ENCODE measurements at regions of chr19 and their contacts with region 1.

Region 1: DNA sequence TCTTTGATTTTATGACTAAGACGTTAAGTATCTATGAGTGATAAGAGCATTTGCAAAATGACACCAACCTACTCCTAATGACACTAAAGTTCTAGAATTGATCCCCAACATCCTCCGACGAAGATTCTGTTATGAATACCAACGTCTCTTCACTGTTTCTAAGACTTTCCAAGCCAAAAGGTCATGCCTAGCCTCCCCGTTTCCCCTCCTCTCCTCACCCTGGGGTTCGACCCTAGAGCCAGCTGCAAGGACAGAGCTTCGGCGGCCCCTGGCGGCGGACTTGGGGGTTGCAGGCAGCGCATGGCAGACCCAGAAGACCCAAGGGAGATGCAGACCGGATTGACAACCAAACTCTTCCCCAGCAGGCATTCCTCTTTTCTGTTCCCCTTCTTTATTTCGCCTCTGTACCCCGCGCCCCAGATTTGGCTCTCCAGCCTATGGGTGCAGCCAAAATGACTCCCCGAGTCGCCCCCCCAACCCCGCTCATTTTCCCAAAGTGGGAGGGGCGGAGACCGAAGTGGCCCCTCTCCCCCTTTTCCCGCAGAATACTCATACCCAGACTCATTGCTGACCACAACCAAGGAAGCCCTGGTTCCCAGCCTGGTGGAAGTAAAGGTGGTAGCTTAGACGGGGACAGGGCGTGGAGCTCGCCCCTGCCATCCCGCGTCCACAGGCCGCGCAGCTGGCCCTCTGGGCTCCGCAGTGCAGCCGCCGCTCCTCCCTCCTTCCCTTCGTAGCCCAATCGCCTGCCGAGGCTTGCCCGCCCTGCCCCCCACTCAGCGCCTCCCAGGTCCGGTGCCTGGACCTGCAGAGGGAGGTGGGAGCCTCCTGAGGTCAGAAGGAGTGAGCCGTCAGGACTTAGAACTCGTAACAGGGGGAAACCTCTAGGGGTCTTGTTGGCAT is 4.1 kb upstream of the EML2 start:
- DNase-seq: peak; percentile 91 to 95
- H3K4me3 ChIP-seq: peak overlapping the region; percentile 41
- H3K4me3 Mint-ChIP-seq: peak overlapping the region; percentile 70
- H3K27ac Mint-ChIP-seq: no peak overlapping the region
- H3K4me1 ChIP-seq: peaks cover 20% of the 10 kb centered on the region
- H3K4me1 Mint-ChIP-seq: peaks cover 25% of the 10 kb centered on the region
- H3K27me3 ChIP-seq: no peaks in the 10 kb centered on the region
- H3K27me3 Mint-ChIP-seq: no peaks in the 10 kb centered on the region
- CTCF ChIP-seq: peak; percentile 99

Region 2: GRCh38 chr19:45485305-45486077 is 157.8 kb before region 1 on chr19:
- CTCF ChIA-PET with region 1: interaction called, 17 read pairs
- POLR2A ChIA-PET with region 1: interaction called, 3 read pairs
- intact Hi-C with region 1: loop called (anchors 10 kb)
- DNase-seq: peak; percentile 98
- H3K4me3 ChIP-seq: peak overlapping the region; percentile 66
- H3K4me3 Mint-ChIP-seq: peak overlapping the region; percentile 88
- H3K27ac Mint-ChIP-seq: peak overlapping the region; percentile 74
- H3K4me1 ChIP-seq: no peaks in the 10 kb centered on the region
- H3K4me1 Mint-ChIP-seq: peaks cover 6% of the 10 kb centered on the region
- H3K27me3 ChIP-seq: no peaks in the 10 kb centered on the region
- H3K27me3 Mint-ChIP-seq: no peaks in the 10 kb centered on the region
- CTCF ChIP-seq: peak; percentile 91 to 92

Region 3: GRCh38 chr19:45528651-45529419 is 114.4 kb before region 1 on chr19:
- CTCF ChIA-PET with region 1: interaction called, 27 read pairs
- POLR2A ChIA-PET with region 1: no interaction called
- intact Hi-C with region 1: no loop called
- DNase-seq: peak; percentile 88 to 92
- H3K4me3 ChIP-seq: peak overlapping the region; percentile 63
- H3K4me3 Mint-ChIP-seq: peak overlapping the region; percentile 85
- H3K27ac Mint-ChIP-seq: peak overlapping the region; percentile 55
- H3K4me1 ChIP-seq: 0 out of 2 replicates have a peak, but pooled peaks cover 8% of the 10 kb centered on the region
- H3K4me1 Mint-ChIP-seq: peaks cover 10% of the 10 kb centered on the region
- H3K27me3 ChIP-seq: no peaks in the 10 kb centered on the region
- H3K27me3 Mint-ChIP-seq: no peaks in the 10 kb centered on the region
- CTCF ChIP-seq: peak in 1 of 2 experiments; percentile 24

Region 4: DNA sequence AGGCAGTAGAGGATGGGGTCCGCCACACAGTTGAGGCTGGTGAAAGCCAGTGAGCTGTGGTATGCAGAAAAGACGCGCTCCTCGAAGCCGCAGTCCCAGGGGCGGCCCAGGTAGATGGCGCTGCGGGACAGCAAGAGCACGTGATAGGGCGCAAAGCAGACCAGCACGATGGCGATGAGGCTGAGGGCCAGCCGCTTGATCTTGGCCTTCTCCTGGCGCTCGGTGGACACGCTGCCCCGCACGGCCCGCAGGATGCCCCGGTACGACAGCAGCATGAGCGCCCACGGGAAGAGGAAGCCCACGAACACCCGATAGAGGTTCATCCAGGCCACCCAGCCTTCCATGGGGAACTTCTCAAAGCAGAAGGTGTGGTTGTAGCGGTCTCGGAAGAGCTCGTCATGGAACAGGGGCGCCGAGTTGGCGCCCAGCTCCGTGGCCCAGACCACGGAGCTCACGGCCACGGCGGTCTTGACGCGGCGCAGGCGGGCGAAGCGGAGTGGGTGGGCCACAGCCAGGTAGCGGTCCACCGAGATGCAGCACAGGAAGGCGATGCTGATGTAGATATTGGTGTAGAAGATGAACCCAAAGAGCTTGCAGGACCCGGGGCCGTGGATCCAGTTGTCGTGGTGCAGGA is 52.2 kb before region 1 on chr19:
- CTCF ChIA-PET with region 1: interaction called, 77 read pairs
- POLR2A ChIA-PET with region 1: no interaction called
- intact Hi-C with region 1: loop called (anchors 1 kb)
- DNase-seq: peak; percentile 83 to 85
- H3K4me3 ChIP-seq: peak overlapping the region; percentile 13; the same call in 1 of the 2 replicates
- H3K4me3 Mint-ChIP-seq: peak overlapping the region; percentile 43
- H3K27ac Mint-ChIP-seq: no peak overlapping the region
- H3K4me1 ChIP-seq: peaks cover 4% of the 10 kb centered on the region
- H3K4me1 Mint-ChIP-seq: peaks cover 7% of the 10 kb centered on the region
- H3K27me3 ChIP-seq: no peaks in the 10 kb centered on the region
- H3K27me3 Mint-ChIP-seq: peaks cover 18% of the 10 kb centered on the region
- CTCF ChIP-seq: peak; percentile 75 to 88

Region 5: GRCh38 chr19:45630493-45630919 is 12.8 kb before region 1 on chr19:
- CTCF ChIA-PET with region 1: interaction called, 14 read pairs
- POLR2A ChIA-PET with region 1: interaction called, 8 read pairs
- intact Hi-C with region 1: no loop called
- DNase-seq: no peak
- H3K4me3 ChIP-seq: no peak overlapping the region
- H3K4me3 Mint-ChIP-seq: no peak overlapping the region
- H3K27ac Mint-ChIP-seq: no peak overlapping the region
- H3K4me1 ChIP-seq: no peaks in the 10 kb centered on the region
- H3K4me1 Mint-ChIP-seq: no peaks in the 10 kb centered on the region
- H3K27me3 ChIP-seq: no peaks in the 10 kb centered on the region
- H3K27me3 Mint-ChIP-seq: no peaks in the 10 kb centered on the region
- CTCF ChIP-seq: no peak

Region 6: DNA sequence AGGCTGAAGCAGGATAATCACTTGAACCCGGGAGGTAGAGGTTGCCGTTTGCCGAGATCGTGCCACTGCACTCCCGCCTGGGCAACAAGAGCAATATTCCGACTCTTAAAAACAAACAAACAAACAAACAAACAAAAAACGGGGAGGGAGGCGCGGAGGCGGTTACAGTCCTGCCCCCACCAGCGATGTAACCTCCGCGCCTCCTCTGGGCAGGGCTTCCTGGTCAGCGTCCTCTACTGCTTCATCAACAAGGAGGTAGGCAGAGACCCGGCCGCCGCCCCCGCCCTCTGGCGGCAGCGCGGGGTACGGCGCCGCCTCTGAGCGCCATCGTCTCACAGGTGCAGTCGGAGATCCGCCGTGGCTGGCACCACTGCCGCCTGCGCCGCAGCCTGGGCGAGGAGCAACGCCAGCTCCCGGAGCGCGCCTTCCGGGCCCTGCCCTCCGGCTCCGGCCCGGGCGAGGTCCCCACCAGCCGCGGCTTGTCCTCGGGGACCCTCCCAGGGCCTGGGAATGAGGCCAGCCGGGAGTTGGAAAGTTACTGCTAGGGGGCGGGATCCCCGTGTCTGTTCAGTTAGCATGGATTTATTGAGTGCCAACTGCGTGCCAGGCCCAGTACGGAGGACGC is 38.2 kb after region 1 on chr19:
- CTCF ChIA-PET with region 1: interaction called, 50 read pairs
- POLR2A ChIA-PET with region 1: interaction called, 6 read pairs
- intact Hi-C with region 1: no loop called
- DNase-seq: peak; percentile 88 to 93
- H3K4me3 ChIP-seq: peak overlapping the region; percentile 40
- H3K4me3 Mint-ChIP-seq: peak overlapping the region; percentile 76
- H3K27ac Mint-ChIP-seq: peak overlapping the region; percentile 81
- H3K4me1 ChIP-seq: peaks cover 15% of the 10 kb centered on the region
- H3K4me1 Mint-ChIP-seq: peaks cover 12% of the 10 kb centered on the region
- H3K27me3 ChIP-seq: no peaks in the 10 kb centered on the region
- H3K27me3 Mint-ChIP-seq: no peaks in the 10 kb centered on the region
- CTCF ChIP-seq: peak; percentile 96 to 97

Region 7: DNA sequence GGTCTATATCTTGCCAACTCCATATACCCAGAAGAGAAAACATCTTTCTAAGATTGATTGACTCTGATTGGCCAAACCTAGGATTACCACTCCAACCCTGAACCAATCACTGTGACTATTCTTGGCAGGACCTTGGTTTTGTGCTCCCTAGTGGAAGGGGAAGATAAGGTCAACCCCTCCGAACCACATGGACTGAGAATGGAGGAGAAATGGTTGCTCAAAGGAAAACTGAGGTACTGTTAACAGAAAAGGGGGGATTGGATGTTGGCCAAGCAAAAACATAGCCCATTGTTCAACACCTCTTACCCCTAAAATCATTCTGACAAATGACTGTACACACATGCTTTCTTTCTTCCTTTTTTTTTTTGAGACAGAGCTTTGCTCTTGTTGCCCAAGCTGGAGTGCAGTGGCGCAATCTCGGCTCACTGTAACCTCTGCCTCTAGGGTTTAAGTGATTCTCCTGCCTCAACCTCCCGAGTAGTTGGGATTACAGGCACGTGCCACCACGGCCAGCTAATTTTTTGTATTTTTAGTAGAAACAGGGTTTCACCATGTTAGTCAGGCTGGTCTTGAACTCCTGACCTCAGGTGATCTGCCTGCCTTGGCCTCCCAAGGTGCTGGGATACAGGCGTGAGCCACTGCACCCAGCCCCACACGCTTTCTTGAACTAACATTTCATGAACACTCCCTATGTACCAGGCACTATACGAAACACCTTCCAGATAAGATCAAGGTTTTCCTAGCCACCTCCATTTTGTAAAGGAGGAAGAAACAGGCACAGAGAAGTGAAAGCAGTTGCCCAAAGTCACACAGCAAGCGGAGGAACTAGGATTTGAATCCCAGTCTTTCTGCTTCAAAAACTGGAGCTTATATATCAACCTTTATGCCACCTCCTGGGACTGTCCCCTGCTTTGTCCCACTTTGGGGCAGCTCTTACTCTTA is 96.5 kb after region 1 on chr19:
- CTCF ChIA-PET with region 1: no interaction called
- POLR2A ChIA-PET with region 1: no interaction called
- intact Hi-C with region 1: no loop called
- DNase-seq: no peak
- H3K4me3 ChIP-seq: no peak overlapping the region
- H3K4me3 Mint-ChIP-seq: no peak overlapping the region
- H3K27ac Mint-ChIP-seq: no peak overlapping the region
- H3K4me1 ChIP-seq: peaks cover 19% of the 10 kb centered on the region
- H3K4me1 Mint-ChIP-seq: peaks cover 7% of the 10 kb centered on the region
- H3K27me3 ChIP-seq: no peaks in the 10 kb centered on the region
- H3K27me3 Mint-ChIP-seq: no peaks in the 10 kb centered on the region
- CTCF ChIP-seq: no peak